AG04449 (cell line): ENCODE measurements at regions of chr9 and their contacts with region 1.

Region 1: DNA sequence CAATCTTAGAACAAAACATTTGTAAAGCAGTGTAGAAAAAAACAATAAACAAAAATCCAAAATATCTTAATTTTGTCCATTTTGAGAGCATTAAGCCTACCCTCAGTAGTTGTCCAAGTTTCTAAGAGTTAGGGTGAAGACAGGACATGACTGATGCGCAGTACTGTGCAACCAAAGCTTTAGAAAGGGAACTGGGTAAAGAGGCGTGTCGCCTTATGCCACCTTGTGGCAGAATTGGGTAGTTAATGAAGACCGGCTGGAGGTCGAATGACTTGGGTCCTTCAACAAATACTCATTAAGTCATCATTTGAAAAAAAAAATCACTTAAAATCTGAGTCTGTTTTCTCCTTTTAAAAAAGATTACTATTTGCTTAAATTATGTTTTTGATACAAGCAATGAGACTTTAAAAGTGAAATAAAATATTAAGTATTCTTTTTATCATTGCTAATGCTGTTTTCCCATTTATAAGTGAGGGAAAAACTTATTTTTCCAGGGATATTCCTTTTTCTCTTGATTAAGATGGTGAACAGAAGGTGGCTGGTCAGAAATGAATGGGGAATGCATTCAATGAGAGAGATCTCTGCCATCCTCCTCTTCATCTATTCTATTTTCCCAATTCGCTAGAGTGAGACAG is 3.5 kb upstream of the RNF20 start:
- DNase-seq: no peak
- H3K4me3 ChIP-seq: no peak overlapping the region
- CTCF ChIP-seq: peak; percentile 73

Region 2: DNA sequence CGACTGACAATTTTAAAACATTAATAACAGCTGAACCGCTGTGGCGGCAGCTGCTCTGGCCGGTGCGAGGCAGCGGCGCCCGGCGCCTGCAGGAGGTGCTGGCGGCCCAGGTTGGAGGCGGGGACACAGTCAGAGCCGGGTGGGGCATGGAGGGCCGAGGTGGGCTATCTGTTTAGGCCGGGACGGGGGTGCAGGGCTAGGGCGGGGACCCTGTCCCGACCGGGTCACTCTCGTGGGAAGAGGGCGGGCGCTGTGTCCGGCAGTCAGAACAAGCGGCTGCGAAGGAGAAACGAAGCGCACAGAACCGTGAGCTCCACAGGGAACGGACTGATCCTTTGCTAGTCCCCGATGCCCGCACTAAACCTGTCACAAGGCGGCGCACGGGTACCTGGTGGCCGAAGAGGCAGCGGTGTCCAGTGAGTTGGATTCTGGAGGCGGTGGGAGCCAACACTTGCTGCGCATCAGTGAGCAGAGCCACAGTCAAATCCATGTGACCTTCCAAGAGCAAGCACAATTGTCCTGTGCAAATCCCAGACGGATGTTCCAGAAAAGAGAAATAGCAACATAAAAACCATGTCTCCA is 81.0 kb before region 1 on chr9:
- CTCF ChIA-PET with region 1: interaction called, 975 read pairs
- POLR2A ChIA-PET with region 1: interaction called, 3 read pairs
- DNase-seq: no peak
- H3K4me3 ChIP-seq: peak overlapping the region; percentile 72
- CTCF ChIP-seq: peak; percentile 86

Region 3: GRCh38 chr9:101479338-101480030 is 50.7 kb before region 1 on chr9:
- CTCF ChIA-PET with region 1: interaction called, 17 read pairs
- POLR2A ChIA-PET with region 1: interaction called, 3 read pairs
- DNase-seq: no peak
- H3K4me3 ChIP-seq: no peak overlapping the region
- CTCF ChIP-seq: no peak

Region 4: DNA sequence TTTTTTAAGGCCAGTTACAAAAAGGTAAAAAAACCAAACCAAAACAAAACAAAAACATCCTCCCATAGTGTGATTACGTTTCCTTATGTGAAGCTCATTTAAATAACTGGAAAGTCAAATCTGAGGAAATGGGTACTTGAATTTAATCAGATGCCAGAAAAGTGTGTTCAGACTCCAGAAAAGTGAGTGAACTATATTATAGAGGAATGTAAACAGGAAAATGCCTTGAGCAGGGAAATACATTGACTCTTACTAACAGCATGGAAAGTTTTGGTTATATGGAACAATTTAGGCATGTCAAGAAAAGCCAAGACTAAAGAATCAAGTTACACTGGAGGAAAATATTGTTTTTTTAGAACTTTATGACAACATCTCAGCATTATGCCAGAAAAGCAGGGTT is 34.4 kb before region 1 on chr9:
- CTCF ChIA-PET with region 1: interaction called, 25 read pairs
- POLR2A ChIA-PET with region 1: no interaction called
- DNase-seq: peak; percentile 65
- H3K4me3 ChIP-seq: no peak overlapping the region
- CTCF ChIP-seq: no peak

Region 5: DNA sequence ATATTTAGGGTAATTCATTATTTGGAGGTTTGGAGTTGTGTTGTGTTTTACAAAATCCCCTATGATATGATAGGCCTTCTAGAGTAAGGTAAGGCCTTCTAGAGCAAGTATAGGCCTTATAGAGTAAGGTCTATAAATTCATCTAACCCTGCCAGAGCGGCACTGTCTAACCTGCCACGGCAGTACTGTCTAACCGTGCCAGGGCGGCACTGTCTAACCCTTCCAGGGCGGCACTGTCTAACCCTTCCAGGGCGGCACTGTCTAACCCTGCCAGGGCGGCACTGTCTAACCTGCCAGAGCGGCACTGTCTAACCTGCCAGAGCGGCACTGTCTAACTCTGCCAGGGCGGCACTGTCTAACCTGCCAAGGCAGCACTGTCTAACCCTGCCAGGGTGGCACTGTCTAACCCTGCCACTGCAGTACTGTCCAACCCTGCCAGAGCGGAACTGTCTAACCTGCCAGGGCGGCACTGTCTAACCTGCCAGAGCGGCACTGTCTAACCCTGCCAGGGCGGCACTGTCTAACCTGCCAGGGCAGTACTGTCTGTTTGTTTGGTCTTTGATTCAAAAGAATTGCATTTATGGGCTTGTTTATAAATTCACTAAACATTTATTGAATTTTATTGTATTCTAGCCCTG is 13.0 kb after region 1 on chr9:
- CTCF ChIA-PET with region 1: interaction called, 11 read pairs
- POLR2A ChIA-PET with region 1: no interaction called
- DNase-seq: no peak
- H3K4me3 ChIP-seq: no peak overlapping the region
- CTCF ChIP-seq: no peak

Region 6: GRCh38 chr9:101738566-101739183 is 208.5 kb after region 1 on chr9 and contains the start of gene GRIN3A:
- CTCF ChIA-PET with region 1: no interaction called
- POLR2A ChIA-PET with region 1: no interaction called
- DNase-seq: no peak
- H3K4me3 ChIP-seq: no peak within 1 kb of the TSS
- CTCF ChIP-seq: no peak

Region 7: GRCh38 chr9:101758304-101758930 is 228.2 kb after region 1 on chr9:
- CTCF ChIA-PET with region 1: no interaction called
- POLR2A ChIA-PET with region 1: no interaction called
- DNase-seq: no peak
- H3K4me3 ChIP-seq: no peak overlapping the region
- CTCF ChIP-seq: no peak

Region 8: DNA sequence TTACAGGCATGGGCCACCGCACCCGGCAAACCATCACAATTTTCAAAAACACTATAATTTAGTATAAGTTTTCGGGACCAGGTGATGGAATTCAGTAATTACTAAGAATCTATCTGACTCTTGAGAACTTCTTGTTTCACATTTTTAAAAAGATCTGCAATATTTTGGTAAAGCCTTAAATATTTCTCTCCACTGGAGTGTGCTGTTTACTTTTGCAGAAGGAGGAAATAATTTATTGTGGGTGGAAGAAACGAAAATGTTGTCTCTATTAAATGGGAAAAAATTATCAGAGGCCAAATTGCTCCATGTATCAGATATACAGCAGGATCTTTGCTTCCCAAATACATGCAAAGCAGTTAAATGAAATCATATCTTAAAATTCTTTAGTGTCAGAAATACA is 898.1 kb after region 1 on chr9:
- CTCF ChIA-PET with region 1: no interaction called
- POLR2A ChIA-PET with region 1: no interaction called
- DNase-seq: no peak
- H3K4me3 ChIP-seq: no peak overlapping the region
- CTCF ChIP-seq: no peak